Naive thymus-derived CD4-positive, alpha-beta T cell (primary cell): ENCODE measurements at regions of chrX and their contacts with region 1.

Region 1: DNA sequence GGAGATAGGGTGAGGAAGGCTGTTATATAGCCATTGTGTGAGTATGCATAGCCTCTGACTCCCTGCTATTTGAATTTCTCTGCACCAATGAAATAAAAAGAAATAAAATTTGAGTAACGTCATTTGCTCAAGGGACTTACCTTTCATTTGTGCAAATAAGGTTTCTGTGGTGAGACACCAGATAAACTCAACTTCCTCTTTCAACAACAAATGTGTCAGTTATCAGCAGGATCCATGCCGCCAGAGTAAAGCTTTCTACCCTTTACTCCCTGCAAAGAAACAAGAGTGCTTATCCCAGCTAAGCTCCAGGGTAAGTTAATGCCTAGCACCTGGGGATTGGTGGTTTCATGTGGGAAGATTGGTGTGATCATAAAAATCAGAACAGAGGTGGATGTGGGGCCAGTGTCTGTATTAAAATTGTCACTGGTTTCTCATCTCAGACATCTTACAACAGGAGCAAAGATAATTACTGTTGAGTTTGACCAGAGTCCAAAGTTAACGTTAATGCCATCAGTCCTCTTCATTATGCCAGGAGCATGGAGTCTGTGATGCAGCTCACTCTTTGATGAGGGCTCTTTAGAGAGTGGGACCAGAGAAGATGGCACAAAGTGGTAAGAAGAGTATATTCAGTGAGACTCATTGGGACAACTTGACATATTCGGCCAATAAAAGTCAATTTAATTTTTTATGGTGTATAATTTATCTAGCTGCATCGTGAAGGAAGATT is at the start of gene P2RY10:
- DNase-seq: peak in 8 of 9 donors; percentile 21 to 82 (median 75)
- ATAC-seq: peak; percentile 92
- H3K4me3 ChIP-seq: peak within 1 kb of the TSS; percentile 81
- H3K4me3 Mint-ChIP-seq: peak within 1 kb of the TSS; percentile 86 to 99 (median 92)
- H3K27ac ChIP-seq: peak within 1 kb of the TSS; percentile 86
- H3K27ac Mint-ChIP-seq: peak within 1 kb of the TSS; percentile 94 to 99 (median 98)
- H3K4me1 ChIP-seq: peaks cover 6 to 19% of the 10 kb centered on the region in 2 donors
- H3K4me1 Mint-ChIP-seq: peaks cover 15 to 62% (median 51%) of the 10 kb centered on the region in 7 donors
- H3K27me3 ChIP-seq: no peaks in the 10 kb centered on the region
- H3K27me3 Mint-ChIP-seq: no peaks in the 10 kb centered on the region
- total RNA-seq, gene P2RY10: 47.6 to 98.5 (median 67.4) TPM

Region 2: DNA sequence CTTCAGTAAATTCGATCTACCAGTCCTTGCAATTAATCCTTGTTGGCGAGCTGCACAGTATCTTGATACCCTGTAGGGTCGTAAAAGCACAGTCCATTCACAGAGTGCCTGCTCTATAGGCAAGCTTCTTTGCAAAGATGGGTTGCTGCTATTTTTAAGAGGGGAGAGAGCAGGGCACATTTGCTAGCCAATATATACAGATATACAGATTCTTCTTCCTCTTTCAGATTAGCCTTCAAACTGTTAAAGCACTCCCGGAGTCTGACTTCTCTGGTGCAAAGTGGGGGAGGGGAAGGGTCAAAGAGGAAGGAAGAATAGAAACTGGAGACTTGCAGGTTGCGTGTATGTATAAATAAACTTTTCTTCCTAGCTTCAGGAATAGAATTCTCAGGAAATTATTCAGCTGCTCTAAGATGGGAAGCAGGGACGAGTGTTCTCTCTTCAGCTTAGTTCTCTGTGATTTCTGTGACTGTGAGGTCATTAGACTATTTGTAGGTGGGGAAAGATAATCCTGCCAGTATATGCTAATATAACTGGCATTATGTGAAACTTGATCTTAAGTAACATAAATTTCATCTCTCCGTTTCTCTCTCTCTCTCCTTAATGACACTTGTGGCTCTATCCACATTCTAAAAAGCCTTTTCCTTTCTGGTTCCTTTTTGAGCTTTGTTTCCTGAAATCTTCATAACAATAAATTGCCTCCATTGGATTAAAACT is 617.8 kb before region 1 on chrX and contains the start of gene CYSLTR1:
- CTCF ChIA-PET with region 1: no interaction called
- POLR2A ChIA-PET with region 1: no interaction called
- intact Hi-C with region 1: loop called (anchors 5 kb)
- DNase-seq: no peak
- ATAC-seq: peak; percentile 44
- H3K4me3 ChIP-seq: peak within 1 kb of the TSS; percentile 47
- H3K4me3 Mint-ChIP-seq: peak within 1 kb of the TSS; percentile 78 to 97 (median 88)
- H3K27ac ChIP-seq: peak within 1 kb of the TSS; percentile 84
- H3K27ac Mint-ChIP-seq: peak within 1 kb of the TSS; percentile 82 to 99 (median 93)
- H3K4me1 ChIP-seq: peaks cover 9 to 23% of the 10 kb centered on the region in 2 donors
- H3K4me1 Mint-ChIP-seq: peaks cover 26 to 65% (median 62%) of the 10 kb centered on the region in 7 donors
- H3K27me3 ChIP-seq: no peaks in the 10 kb centered on the region
- H3K27me3 Mint-ChIP-seq: no peaks in the 10 kb centered on the region
- total RNA-seq, gene CYSLTR1: 13.7 to 71.9 (median 24.9) TPM

Region 3: GRCh38 chrX:78653118-78653822 is 292.1 kb before region 1 on chrX:
- CTCF ChIA-PET with region 1: no interaction called
- POLR2A ChIA-PET with region 1: interaction called, 3 read pairs
- intact Hi-C with region 1: loop called in 1 of 2 experiments (anchors 2 kb)
- DNase-seq: no peak
- ATAC-seq: peak; percentile 57
- H3K4me3 ChIP-seq: no peak overlapping the region
- H3K4me3 Mint-ChIP-seq: peak overlapping the region in 1 of 10 donors; percentile 74
- H3K27ac ChIP-seq: no peak overlapping the region
- H3K27ac Mint-ChIP-seq: peak overlapping the region in 1 of 9 donors; percentile 53
- H3K4me1 ChIP-seq: peaks cover 12 to 13% of the 10 kb centered on the region in 2 donors
- H3K4me1 Mint-ChIP-seq: peaks cover 11 to 35% (median 23%) of the 10 kb centered on the region in 7 donors
- H3K27me3 ChIP-seq: no peaks in the 10 kb centered on the region
- H3K27me3 Mint-ChIP-seq: no peaks in the 10 kb centered on the region

Region 4: GRCh38 chrX:78831523-78831922 is 113.8 kb before region 1 on chrX:
- CTCF ChIA-PET with region 1: no interaction called
- POLR2A ChIA-PET with region 1: no interaction called
- intact Hi-C with region 1: no loop called
- DNase-seq: no peak
- ATAC-seq: no peak
- H3K4me3 ChIP-seq: no peak overlapping the region
- H3K4me3 Mint-ChIP-seq: no peak overlapping the region
- H3K27ac ChIP-seq: no peak overlapping the region
- H3K27ac Mint-ChIP-seq: no peak overlapping the region
- H3K4me1 ChIP-seq: no peaks in the 10 kb centered on the region
- H3K4me1 Mint-ChIP-seq: peaks cover 0 to 4% (median 0%) of the 10 kb centered on the region in 7 donors
- H3K27me3 ChIP-seq: no peaks in the 10 kb centered on the region
- H3K27me3 Mint-ChIP-seq: no peaks in the 10 kb centered on the region

Region 5: DNA sequence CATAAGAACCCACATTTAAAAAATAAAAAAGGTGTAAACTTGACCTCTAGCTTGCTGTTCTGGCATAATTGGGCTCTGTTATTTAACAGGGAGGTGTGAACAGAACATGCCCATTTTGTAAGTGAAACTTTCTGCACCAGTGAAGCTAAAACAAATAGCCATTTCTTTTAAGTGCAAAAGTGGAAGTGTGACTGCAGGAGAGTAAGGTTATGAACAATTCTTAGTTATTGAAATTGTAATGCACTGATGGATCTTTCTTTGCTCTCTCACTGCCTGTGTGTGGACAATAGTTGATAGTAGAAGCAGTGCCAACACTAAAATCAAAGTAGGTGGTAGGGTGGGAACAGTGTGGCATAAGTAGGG is 12.4 kb after region 1 on chrX:
- CTCF ChIA-PET with region 1: no interaction called
- POLR2A ChIA-PET with region 1: interaction called, 9 read pairs
- intact Hi-C with region 1: loop called in 1 of 2 experiments (anchors 1 kb)
- DNase-seq: no peak
- ATAC-seq: peak; percentile 26
- H3K4me3 ChIP-seq: no peak overlapping the region
- H3K4me3 Mint-ChIP-seq: peak overlapping the region in 7 of 10 donors; percentile 5 to 49 (median 32)
- H3K27ac ChIP-seq: peak overlapping the region; percentile 51
- H3K27ac Mint-ChIP-seq: peak overlapping the region; percentile 61 to 97 (median 88)
- H3K4me1 ChIP-seq: peaks cover 34 to 35% of the 10 kb centered on the region in 2 donors
- H3K4me1 Mint-ChIP-seq: peaks cover 31 to 84% (median 64%) of the 10 kb centered on the region in 7 donors
- H3K27me3 ChIP-seq: no peaks in the 10 kb centered on the region
- H3K27me3 Mint-ChIP-seq: no peaks in the 10 kb centered on the region

Region 6: GRCh38 chrX:79161655-79162054 is 216.3 kb after region 1 on chrX:
- CTCF ChIA-PET with region 1: no interaction called
- POLR2A ChIA-PET with region 1: interaction called, 4 read pairs
- intact Hi-C with region 1: loop called in 1 of 2 experiments (anchors 2 kb)
- DNase-seq: peak in 8 of 9 donors; percentile 22 to 85 (median 77)
- ATAC-seq: peak; percentile 95
- H3K4me3 ChIP-seq: peak overlapping the region; percentile 52
- H3K4me3 Mint-ChIP-seq: peak overlapping the region; percentile 80 to 96 (median 90)
- H3K27ac ChIP-seq: peak overlapping the region; percentile 76
- H3K27ac Mint-ChIP-seq: peak overlapping the region; percentile 95 to 99 (median 97)
- H3K4me1 ChIP-seq: peaks cover 48 to 50% of the 10 kb centered on the region in 2 donors
- H3K4me1 Mint-ChIP-seq: peaks cover 16 to 79% (median 68%) of the 10 kb centered on the region in 7 donors
- H3K27me3 ChIP-seq: no peaks in the 10 kb centered on the region
- H3K27me3 Mint-ChIP-seq: no peaks in the 10 kb centered on the region

Region 7: GRCh38 chrX:79270401-79270800 is 325.1 kb after region 1 on chrX:
- CTCF ChIA-PET with region 1: no interaction called
- POLR2A ChIA-PET with region 1: interaction called, 5 read pairs
- intact Hi-C with region 1: loop called in 1 of 2 experiments (anchors 1 kb)
- DNase-seq: peak; percentile 29 to 76 (median 68)
- ATAC-seq: peak; percentile 98
- H3K4me3 ChIP-seq: no peak overlapping the region
- H3K4me3 Mint-ChIP-seq: peak overlapping the region; percentile 17 to 77 (median 56)
- H3K27ac ChIP-seq: peak overlapping the region; percentile 61
- H3K27ac Mint-ChIP-seq: peak overlapping the region in 8 of 9 donors; percentile 84 to 94 (median 90)
- H3K4me1 ChIP-seq: peaks cover 24 to 34% of the 10 kb centered on the region in 2 donors
- H3K4me1 Mint-ChIP-seq: peaks cover 13 to 68% (median 45%) of the 10 kb centered on the region in 7 donors
- H3K27me3 ChIP-seq: no peaks in the 10 kb centered on the region
- H3K27me3 Mint-ChIP-seq: no peaks in the 10 kb centered on the region

Region 8: GRCh38 chrX:79366873-79367749 is 421.8 kb after region 1 on chrX and contains the start of gene ITM2A:
- CTCF ChIA-PET with region 1: no interaction called
- POLR2A ChIA-PET with region 1: interaction called, 4 read pairs
- intact Hi-C with region 1: loop called (anchors 1 to 2 kb)
- DNase-seq: peak; percentile 31 to 75 (median 62)
- ATAC-seq: peak; percentile 86
- H3K4me3 ChIP-seq: peak within 1 kb of the TSS; percentile 93
- H3K4me3 Mint-ChIP-seq: peak within 1 kb of the TSS; percentile 89 to 99 (median 95)
- H3K27ac ChIP-seq: peak within 1 kb of the TSS; percentile 89
- H3K27ac Mint-ChIP-seq: peak within 1 kb of the TSS; percentile 92 to 99 (median 98)
- H3K4me1 ChIP-seq: peaks cover 7 to 13% of the 10 kb centered on the region in 2 donors
- H3K4me1 Mint-ChIP-seq: peaks cover 7 to 39% (median 31%) of the 10 kb centered on the region in 7 donors
- H3K27me3 ChIP-seq: no peaks in the 10 kb centered on the region
- H3K27me3 Mint-ChIP-seq: no peaks in the 10 kb centered on the region
- total RNA-seq, gene ITM2A: 109 to 170 (median 154) TPM